ENCODE measurements at regions of chr15 and their contacts with region 1.

Region 1: DNA sequence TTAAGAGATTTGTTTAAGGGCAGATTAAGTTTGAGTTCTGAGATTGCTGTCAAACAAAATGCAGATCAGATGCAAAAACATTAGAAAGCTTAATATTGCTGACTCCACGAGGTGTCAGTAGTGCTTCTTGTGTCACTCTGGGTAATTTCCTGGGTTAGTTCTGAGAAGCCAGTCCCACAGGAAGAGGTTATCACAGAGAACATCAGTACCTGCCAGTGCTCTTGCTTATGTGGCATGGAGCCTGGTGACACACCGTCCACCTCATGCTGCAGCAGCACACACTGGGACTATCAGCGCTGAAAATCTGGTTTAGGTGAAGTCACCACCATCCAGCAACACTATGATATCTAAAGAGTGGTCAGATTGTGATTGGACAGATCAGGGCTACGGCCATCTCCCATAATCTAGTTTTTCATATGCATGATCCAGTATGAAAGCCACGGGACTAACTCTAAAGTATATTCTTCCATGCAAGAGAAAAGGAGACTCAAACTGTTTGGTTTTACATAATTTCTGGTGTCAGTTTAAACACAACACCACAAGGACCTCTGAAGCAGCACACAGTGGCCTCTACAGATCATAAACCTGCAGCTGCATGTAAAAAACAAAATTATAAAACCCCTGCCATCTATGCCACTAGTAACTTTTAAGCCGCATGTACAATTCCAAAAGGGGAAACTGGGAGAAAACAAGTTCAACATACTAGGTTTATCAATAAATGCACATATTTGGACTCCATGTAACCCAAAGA is 36.1 kb upstream of the MYO5C start:
- DNase-seq: peak; percentile 68
- H3K4me3 ChIP-seq: no peak overlapping the region
- H3K27ac ChIP-seq: no peak overlapping the region
- H3K4me1 ChIP-seq: peaks cover 6% of the 10 kb centered on the region
- H3K27me3 ChIP-seq: no peaks in the 10 kb centered on the region
- CTCF ChIP-seq: peak; percentile 36 to 45
- POLR2A ChIP-seq: no peak

Region 2: GRCh38 chr15:52466134-52466701 is 134.6 kb after region 1 on chr15:
- CTCF ChIA-PET with region 1: interaction called, 8 read pairs
- POLR2A ChIA-PET with region 1: no interaction called
- dilution Hi-C with region 1: no loop called
- intact Hi-C with region 1: loop called (anchors 5 kb)
- DNase-seq: no peak
- H3K4me3 ChIP-seq: no peak overlapping the region
- H3K27ac ChIP-seq: no peak overlapping the region
- H3K4me1 ChIP-seq: peaks cover 28% of the 10 kb centered on the region
- H3K27me3 ChIP-seq: no peaks in the 10 kb centered on the region
- CTCF ChIP-seq: no peak
- POLR2A ChIP-seq: no peak

Measured in endothelial cell of umbilical vein (primary cell).